CD8-positive, alpha-beta memory T cell (primary cell): ENCODE measurements at regions of chr11 and their contacts with region 1.

Region 1: DNA sequence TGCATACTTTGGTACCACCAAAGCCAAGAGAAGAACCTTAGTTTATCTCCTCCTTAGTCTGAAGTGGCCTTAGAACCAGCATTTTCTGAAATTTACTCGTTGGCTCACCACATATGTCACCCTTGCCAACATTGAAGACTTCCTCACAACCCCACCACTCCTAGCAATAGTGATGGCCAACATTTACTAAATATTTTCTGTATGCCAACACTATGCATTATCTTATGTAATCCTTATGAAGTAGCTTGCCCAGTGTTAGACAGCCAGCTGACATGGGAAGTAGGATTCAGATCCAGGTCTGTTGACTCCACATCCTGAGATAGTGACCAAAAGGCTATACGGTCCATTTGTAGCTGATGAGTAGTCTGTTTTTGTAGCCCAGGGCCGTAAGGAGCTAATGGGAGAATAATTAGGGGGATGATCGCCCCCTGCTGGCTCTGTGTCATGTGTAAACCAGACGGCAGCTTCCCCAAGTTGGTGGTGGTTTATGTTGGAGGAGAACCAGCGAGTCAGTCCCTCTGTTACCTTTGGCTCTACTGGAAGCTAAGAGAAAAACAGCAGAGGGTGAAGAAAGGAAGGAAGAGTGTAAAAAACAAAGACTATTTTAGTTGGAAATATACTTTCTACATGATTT is 120.5 kb upstream of the RASSF10 start:
- DNase-seq: peak; percentile 26 to 58 (median 44)
- H3K4me3 ChIP-seq: no peak overlapping the region
- H3K4me3 Mint-ChIP-seq: no peak overlapping the region
- H3K27ac ChIP-seq: no peak overlapping the region
- H3K27ac Mint-ChIP-seq: no peak overlapping the region
- H3K4me1 ChIP-seq: no peaks in the 10 kb centered on the region
- H3K4me1 Mint-ChIP-seq: no peaks in the 10 kb centered on the region
- H3K27me3 ChIP-seq: no peaks in the 10 kb centered on the region
- H3K27me3 Mint-ChIP-seq: peaks cover 3 to 17% of the 10 kb centered on the region in 2 donors

Region 2: GRCh38 chr11:12288212-12288930 is 600.3 kb before region 1 on chr11:
- CTCF ChIA-PET with region 1: interaction called, 17 read pairs
- POLR2A ChIA-PET with region 1: no interaction called
- DNase-seq: peak; percentile 12 to 58 (median 29)
- H3K4me3 ChIP-seq: no peak overlapping the region
- H3K4me3 Mint-ChIP-seq: no peak overlapping the region
- H3K27ac ChIP-seq: no peak overlapping the region
- H3K27ac Mint-ChIP-seq: peak overlapping the region in 2 of 8 donors; percentile 29 to 60
- H3K4me1 ChIP-seq: peaks cover 8% of the 10 kb centered on the region
- H3K4me1 Mint-ChIP-seq: peaks cover 10 to 13% (median 12%) of the 10 kb centered on the region in 3 donors
- H3K27me3 ChIP-seq: no peaks in the 10 kb centered on the region
- H3K27me3 Mint-ChIP-seq: peaks cover 0 to 1% of the 10 kb centered on the region in 2 donors

Region 3: GRCh38 chr11:13000721-13001120 is 112.1 kb after region 1 on chr11:
- CTCF ChIA-PET with region 1: no interaction called
- POLR2A ChIA-PET with region 1: no interaction called
- DNase-seq: no peak
- H3K4me3 ChIP-seq: no peak overlapping the region
- H3K4me3 Mint-ChIP-seq: no peak overlapping the region
- H3K27ac ChIP-seq: no peak overlapping the region
- H3K27ac Mint-ChIP-seq: no peak overlapping the region
- H3K4me1 ChIP-seq: no peaks in the 10 kb centered on the region
- H3K4me1 Mint-ChIP-seq: no peaks in the 10 kb centered on the region
- H3K27me3 ChIP-seq: no peaks in the 10 kb centered on the region
- H3K27me3 Mint-ChIP-seq: peaks cover 15 to 53% of the 10 kb centered on the region in 2 donors